ENCODE measurements at regions of chr2 and their contacts with region 1.

Region 1: DNA sequence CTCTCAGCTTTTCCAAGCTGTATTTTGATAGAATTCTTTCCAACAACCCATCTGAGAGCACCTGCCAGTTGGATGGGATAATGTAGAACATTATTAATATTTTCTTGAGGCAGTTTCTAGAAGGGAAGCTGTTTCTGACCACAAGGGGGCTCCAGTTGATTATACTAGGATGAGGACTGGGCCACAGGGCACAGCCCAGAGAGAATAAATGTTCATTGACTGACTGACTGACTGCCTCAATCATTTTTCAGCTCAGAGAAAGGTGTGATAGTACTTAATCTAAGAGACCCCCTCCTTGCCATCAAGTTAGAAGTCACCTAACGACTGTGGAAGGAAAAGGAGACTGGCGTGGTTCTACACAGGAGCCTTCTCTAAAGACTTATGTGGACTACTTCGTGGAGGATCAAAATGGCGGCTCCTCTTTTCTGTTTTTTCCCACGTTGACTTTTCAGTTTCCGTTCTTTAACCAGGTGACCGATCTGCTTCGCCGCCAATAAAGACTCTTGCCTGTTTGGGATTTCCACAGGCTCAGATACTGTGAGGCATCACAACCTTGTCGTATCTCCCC is 31.9 kb upstream of the CREG2 start:
- DNase-seq: peak; percentile 52 to 61
- H3K4me3 ChIP-seq: no peak overlapping the region
- H3K27ac ChIP-seq: no peak overlapping the region
- H3K4me1 ChIP-seq: no peaks in the 10 kb centered on the region
- H3K27me3 ChIP-seq: no peaks in the 10 kb centered on the region
- CTCF ChIP-seq: peak; percentile 55 to 81 (median 64)
- POLR2A ChIP-seq: no peak

Region 2: GRCh38 chr2:101473911-101474701 is 54.9 kb after region 1 on chr2:
- intact Hi-C with region 1: no loop called
- DNase-seq: peak; percentile 15 to 29
- H3K4me3 ChIP-seq: peak overlapping the region in 1 of 3 donors; percentile 52
- H3K27ac ChIP-seq: peak overlapping the region in 2 of 3 donors; percentile 53 to 79
- H3K4me1 ChIP-seq: peaks cover 0 to 17% of the 10 kb centered on the region in 2 donors
- H3K27me3 ChIP-seq: no peaks in the 10 kb centered on the region
- CTCF ChIP-seq: no peak
- POLR2A ChIP-seq: no peak

Region 3: DNA sequence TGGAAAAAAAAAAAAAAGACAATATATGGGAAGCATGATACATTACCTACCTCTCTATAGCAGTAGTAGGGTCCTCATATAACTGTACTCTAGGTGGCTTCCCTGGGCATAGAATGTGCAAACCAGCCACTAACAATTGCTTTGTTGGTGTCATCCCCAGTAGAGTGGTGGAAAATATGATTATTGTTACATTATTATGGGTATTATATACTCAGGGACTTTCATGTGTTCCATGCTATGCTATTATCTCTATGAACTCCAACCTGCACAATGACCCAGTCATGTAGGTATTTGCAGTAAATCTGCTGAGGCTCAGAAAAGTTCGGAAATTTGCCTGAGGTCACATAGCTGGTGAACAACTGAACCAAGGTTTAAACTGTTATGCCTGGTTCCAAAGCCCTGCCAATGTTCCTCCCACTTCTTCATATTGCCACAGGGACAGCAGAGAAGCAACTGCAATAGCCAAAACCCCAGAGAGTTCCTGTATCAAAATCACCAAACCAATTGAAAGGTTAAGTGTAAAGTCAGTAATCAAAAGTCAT is 225.7 kb after region 1 on chr2:
- intact Hi-C with region 1: no loop called
- DNase-seq: no peak
- H3K4me3 ChIP-seq: no peak overlapping the region
- H3K27ac ChIP-seq: no peak overlapping the region
- H3K4me1 ChIP-seq: no peaks in the 10 kb centered on the region
- H3K27me3 ChIP-seq: no peaks in the 10 kb centered on the region
- CTCF ChIP-seq: no peak
- POLR2A ChIP-seq: no peak

Region 4: DNA sequence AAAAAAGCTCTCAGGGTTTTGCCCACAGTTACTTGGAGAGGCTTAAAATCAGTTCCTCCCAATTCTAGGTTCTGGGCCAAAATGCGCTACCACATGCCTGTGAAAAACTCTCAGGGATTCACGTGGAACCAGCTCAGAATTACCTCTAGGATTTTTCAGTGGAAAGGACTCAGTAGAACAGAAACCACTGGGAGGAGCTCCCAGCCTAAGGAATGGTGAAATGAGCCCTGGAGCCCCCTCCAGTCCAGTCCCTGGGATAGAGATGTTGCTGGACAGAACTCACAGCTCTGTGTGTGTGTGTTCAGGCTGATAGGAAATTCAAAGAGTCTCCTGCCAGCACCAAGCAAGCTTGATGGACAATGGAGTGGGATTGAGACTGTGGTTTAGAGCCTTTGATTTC is 1032.8 kb after region 1 on chr2:
- intact Hi-C with region 1: loop called (anchors 10 kb)
- DNase-seq: no peak
- H3K4me3 ChIP-seq: no peak overlapping the region
- H3K27ac ChIP-seq: no peak overlapping the region
- H3K4me1 ChIP-seq: no peaks in the 10 kb centered on the region
- H3K27me3 ChIP-seq: no peaks in the 10 kb centered on the region
- CTCF ChIP-seq: no peak
- POLR2A ChIP-seq: no peak